ENCODE measurements at regions of chr9 and their contacts with region 1.

Region 1: GRCh38 chr9:106862825-106863720 is at the start of gene ZNF462:
- DNase-seq: peak; percentile 62 to 86 (median 79)
- H3K4me3 ChIP-seq: peak within 1 kb of the TSS; percentile 39 to 77 (median 67)
- H3K27ac ChIP-seq: peak within 1 kb of the TSS; percentile 43 to 89 (median 79)
- H3K4me1 ChIP-seq: peaks cover 14 to 35% of the 10 kb centered on the region in 2 donors
- H3K27me3 ChIP-seq: no peaks in the 10 kb centered on the region
- CTCF ChIP-seq: peak in 5 of 6 experiments; percentile 79 to 97 (median 93)
- POLR2A ChIP-seq: peak in 1 of 2 donors; percentile 56
- total RNA-seq, gene ZNF462: 26.4 to 86.9 (median 48.4) TPM

Region 2: GRCh38 chr9:106621313-106622163 is 241.5 kb before region 1 on chr9:
- intact Hi-C with region 1: no loop called
- DNase-seq: no peak
- H3K4me3 ChIP-seq: no peak overlapping the region
- H3K27ac ChIP-seq: no peak overlapping the region
- H3K4me1 ChIP-seq: no peaks in the 10 kb centered on the region
- H3K27me3 ChIP-seq: no peaks in the 10 kb centered on the region
- CTCF ChIP-seq: no peak
- POLR2A ChIP-seq: no peak

Region 3: GRCh38 chr9:106941916-106942315 is 78.8 kb after region 1 on chr9:
- intact Hi-C with region 1: loop called in 1 of 2 experiments (anchors 5 kb)
- DNase-seq: no peak
- H3K4me3 ChIP-seq: no peak overlapping the region
- H3K27ac ChIP-seq: no peak overlapping the region
- H3K4me1 ChIP-seq: peaks cover 0 to 17% of the 10 kb centered on the region in 2 donors
- H3K27me3 ChIP-seq: no peaks in the 10 kb centered on the region
- CTCF ChIP-seq: no peak
- POLR2A ChIP-seq: no peak

Measured in adrenal gland (tissue), 19 donors.